Endothelial cell of umbilical vein (primary cell): ENCODE measurements at regions of chr15 and their contacts with region 1.

Region 1: DNA sequence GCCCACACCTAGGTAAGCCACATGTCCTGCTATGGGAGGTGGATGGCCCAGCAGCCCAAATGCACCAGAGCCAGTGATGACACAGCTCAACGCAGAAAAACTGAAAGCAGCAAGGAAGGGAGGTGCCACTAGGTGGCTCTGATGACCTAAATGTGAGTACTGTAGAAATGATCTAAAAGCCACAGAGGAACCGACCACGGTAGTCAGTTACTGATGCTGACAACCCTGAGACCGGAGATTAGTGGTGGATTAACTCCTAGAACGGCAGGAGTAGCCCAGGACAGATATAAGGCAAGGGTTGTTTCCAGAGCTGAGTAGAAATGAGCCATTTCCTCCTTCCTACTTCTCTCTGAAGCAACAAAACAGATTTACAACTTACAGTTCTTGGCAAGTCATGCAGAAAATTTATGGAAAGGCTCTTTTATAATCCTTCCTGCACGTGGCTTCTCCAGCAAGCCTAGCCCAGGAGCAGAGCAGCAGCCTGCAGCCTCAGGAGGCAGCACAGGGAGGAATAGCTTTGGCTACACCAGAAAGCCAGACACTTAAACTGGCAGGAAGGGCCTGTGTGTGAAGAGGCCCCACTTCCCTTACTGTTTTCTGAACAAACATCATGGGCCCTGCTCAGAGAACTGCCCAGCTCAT is 13.1 kb downstream of the FBXL22 start:
- DNase-seq: peak; percentile 85
- H3K4me3 ChIP-seq: no peak overlapping the region
- H3K27ac ChIP-seq: peak overlapping the region; percentile 18
- H3K4me1 ChIP-seq: peaks cover 18% of the 10 kb centered on the region
- H3K27me3 ChIP-seq: no peaks in the 10 kb centered on the region
- CTCF ChIP-seq: peak; percentile 70 to 73
- POLR2A ChIP-seq: no peak

Region 2: GRCh38 chr15:63436872-63437375 is 173.4 kb before region 1 on chr15:
- CTCF ChIA-PET with region 1: no interaction called
- POLR2A ChIA-PET with region 1: no interaction called
- dilution Hi-C with region 1: no loop called
- intact Hi-C with region 1: no loop called
- DNase-seq: peak; percentile 70
- H3K4me3 ChIP-seq: no peak overlapping the region
- H3K27ac ChIP-seq: peak overlapping the region; percentile 29
- H3K4me1 ChIP-seq: peaks cover 8% of the 10 kb centered on the region
- H3K27me3 ChIP-seq: no peaks in the 10 kb centered on the region
- CTCF ChIP-seq: no peak
- POLR2A ChIP-seq: no peak

Region 3: GRCh38 chr15:63626955-63627354 is 16.6 kb after region 1 on chr15:
- CTCF ChIA-PET with region 1: interaction called, 17 read pairs
- POLR2A ChIA-PET with region 1: no interaction called
- dilution Hi-C with region 1: no loop called
- intact Hi-C with region 1: no loop called
- DNase-seq: no peak
- H3K4me3 ChIP-seq: no peak overlapping the region
- H3K27ac ChIP-seq: no peak overlapping the region
- H3K4me1 ChIP-seq: no peaks in the 10 kb centered on the region
- H3K27me3 ChIP-seq: no peaks in the 10 kb centered on the region
- CTCF ChIP-seq: no peak
- POLR2A ChIP-seq: no peak

Region 4: DNA sequence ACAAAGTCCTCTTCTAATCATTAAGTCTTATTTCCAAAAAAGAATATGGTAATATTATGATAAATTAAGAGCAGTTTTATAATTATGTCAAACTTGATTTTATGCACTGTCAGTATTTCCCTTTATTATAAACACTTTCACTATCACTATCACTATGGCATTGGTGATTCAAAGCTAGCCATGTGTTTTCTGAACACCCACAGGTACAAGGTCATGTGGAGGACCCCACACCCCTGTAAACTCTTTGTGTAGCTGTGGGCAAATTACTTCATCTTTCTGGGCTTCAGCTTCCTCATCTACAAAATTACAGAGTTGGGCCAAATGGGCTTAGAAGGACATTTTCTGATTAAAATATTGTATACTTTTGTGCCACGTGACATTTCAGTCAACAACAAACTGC is 28.5 kb after region 1 on chr15:
- CTCF ChIA-PET with region 1: interaction called, 29 read pairs
- POLR2A ChIA-PET with region 1: no interaction called
- dilution Hi-C with region 1: no loop called
- intact Hi-C with region 1: no loop called
- DNase-seq: no peak
- H3K4me3 ChIP-seq: no peak overlapping the region
- H3K27ac ChIP-seq: no peak overlapping the region
- H3K4me1 ChIP-seq: peaks cover 4% of the 10 kb centered on the region
- H3K27me3 ChIP-seq: no peaks in the 10 kb centered on the region
- CTCF ChIP-seq: no peak
- POLR2A ChIP-seq: no peak